Dendritic cell treated with granulocyte-macrophage colony-stimulating factor and Interleukin-4, amounts not matched to agents 40 ng/mL and 50 ng/mL, for 4 days (primary cell): ENCODE measurements at regions of chr4 and their contacts with region 1.

Region 1: DNA sequence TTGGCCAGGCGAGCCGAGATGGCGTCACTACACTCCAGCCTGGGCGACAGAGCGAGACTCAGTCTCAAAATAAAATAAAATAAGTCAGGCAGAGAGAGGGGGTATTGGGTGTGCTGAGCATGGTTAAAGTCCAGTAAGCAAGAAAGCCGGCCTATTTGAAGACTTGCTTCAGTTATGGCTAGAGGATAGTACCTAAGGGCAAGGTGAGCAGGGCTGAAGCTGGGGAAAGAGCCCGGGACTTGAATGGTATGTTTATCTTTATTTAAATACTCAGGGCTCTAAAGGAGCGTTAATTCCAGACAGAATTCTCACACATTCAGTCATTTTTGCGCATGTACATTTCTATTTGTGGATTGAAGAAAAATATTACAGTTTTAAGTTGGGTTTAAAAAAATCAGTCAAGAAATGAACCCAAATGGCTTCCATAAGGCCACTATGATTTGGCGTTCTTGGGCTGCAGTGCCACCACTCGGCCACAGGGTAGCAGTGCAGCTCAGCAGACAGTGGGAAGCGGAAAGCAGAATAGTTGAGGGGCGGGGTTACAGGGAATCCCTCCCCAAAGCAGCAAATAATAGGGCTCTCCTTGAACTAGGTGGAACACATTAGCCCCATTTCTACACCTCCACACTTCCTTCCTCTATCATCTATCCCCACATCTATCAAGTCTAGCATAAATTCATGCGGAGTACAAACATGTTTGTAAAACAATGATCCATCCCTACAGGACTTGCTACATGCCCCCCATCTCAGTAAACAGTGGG is 37.2 kb upstream of the SH3D19 start:
- H3K4me3 Mint-ChIP-seq: no peak overlapping the region
- H3K27ac Mint-ChIP-seq: no peak overlapping the region
- H3K4me1 Mint-ChIP-seq: no peaks in the 10 kb centered on the region
- H3K27me3 Mint-ChIP-seq: peaks cover 5% of the 10 kb centered on the region

Region 2: GRCh38 chr4:151117371-151117962 is 245.1 kb before region 1 on chr4:
- intact Hi-C with region 1: loop called (anchors 5 kb)
- H3K4me3 Mint-ChIP-seq: no peak overlapping the region
- H3K27ac Mint-ChIP-seq: no peak overlapping the region
- H3K4me1 Mint-ChIP-seq: no peaks in the 10 kb centered on the region
- H3K27me3 Mint-ChIP-seq: no peaks in the 10 kb centered on the region

Region 3: DNA sequence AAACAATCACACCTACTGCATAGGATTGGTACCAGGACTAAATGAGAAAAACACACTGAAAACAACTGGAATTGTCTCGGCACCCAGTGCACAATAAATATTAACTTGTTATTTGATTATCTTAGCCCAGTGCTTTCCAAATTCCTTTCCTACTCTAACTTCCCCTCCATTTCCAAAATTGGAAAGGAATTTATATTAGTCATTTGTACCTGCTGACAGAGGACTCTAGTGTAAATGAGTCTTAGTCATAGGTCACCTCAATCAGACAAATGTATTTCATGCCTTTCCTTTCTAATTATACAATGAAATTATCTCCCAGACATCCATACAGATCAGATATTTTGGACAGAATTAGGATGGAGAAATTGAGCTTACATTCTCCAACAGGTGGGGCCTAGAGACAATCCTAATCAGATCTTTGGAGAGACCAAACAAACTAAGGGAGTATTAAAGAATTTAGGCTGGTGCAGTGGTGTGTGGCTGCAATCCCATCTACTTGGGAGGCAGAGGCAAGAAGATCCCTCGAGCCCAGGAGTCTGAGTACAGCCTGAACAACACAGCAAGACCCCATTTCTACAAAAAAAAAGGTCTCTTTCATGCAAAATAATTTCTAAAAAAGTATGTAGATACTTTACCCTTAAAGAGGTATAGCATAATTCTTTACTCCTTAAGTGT is 47.2 kb before region 1 on chr4:
- intact Hi-C with region 1: no loop called
- H3K4me3 Mint-ChIP-seq: no peak overlapping the region
- H3K27ac Mint-ChIP-seq: no peak overlapping the region
- H3K4me1 Mint-ChIP-seq: no peaks in the 10 kb centered on the region
- H3K27me3 Mint-ChIP-seq: no peaks in the 10 kb centered on the region

Region 4: DNA sequence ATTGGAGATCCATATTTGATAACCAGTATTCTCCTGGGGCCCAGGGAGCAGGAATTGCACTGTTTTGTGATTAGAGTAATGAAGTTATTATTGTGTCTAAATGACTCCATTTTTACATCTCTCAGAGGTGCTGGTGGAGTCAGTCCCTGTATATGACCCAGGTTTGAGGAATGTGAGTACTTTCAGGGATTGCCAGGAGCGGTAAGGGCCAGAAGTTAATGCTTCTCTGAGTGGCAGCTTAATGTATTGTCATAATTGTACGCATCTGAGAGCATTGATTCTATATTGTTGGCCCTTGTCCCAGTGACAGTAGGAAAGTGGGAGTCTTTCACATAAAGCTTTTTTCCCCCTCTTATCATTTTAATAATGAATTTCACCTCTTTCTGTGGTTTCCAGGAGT is 252.0 kb after region 1 on chr4:
- intact Hi-C with region 1: loop called (anchors 10 kb)
- H3K4me3 Mint-ChIP-seq: no peak overlapping the region
- H3K27ac Mint-ChIP-seq: no peak overlapping the region
- H3K4me1 Mint-ChIP-seq: no peaks in the 10 kb centered on the region
- H3K27me3 Mint-ChIP-seq: peaks cover 6% of the 10 kb centered on the region

Region 5: GRCh38 chr4:151917145-151917734 is 554.7 kb after region 1 on chr4:
- intact Hi-C with region 1: loop called (anchors 10 kb)
- H3K4me3 Mint-ChIP-seq: no peak overlapping the region
- H3K27ac Mint-ChIP-seq: no peak overlapping the region
- H3K4me1 Mint-ChIP-seq: peaks cover 6% of the 10 kb centered on the region
- H3K27me3 Mint-ChIP-seq: no peaks in the 10 kb centered on the region